ENCODE measurements at regions of chr22 and their contacts with region 1.

Region 1: GRCh38 chr22:20624161-20624616 is 116.8 kb downstream of the MED15 start:
- DNase-seq: no peak
- H3K4me3 Mint-ChIP-seq: no peak overlapping the region
- H3K27ac Mint-ChIP-seq: peak overlapping the region; percentile 52
- H3K4me1 Mint-ChIP-seq: peaks cover 20% of the 10 kb centered on the region
- H3K27me3 Mint-ChIP-seq: peaks cover 22% of the 10 kb centered on the region

Region 2: DNA sequence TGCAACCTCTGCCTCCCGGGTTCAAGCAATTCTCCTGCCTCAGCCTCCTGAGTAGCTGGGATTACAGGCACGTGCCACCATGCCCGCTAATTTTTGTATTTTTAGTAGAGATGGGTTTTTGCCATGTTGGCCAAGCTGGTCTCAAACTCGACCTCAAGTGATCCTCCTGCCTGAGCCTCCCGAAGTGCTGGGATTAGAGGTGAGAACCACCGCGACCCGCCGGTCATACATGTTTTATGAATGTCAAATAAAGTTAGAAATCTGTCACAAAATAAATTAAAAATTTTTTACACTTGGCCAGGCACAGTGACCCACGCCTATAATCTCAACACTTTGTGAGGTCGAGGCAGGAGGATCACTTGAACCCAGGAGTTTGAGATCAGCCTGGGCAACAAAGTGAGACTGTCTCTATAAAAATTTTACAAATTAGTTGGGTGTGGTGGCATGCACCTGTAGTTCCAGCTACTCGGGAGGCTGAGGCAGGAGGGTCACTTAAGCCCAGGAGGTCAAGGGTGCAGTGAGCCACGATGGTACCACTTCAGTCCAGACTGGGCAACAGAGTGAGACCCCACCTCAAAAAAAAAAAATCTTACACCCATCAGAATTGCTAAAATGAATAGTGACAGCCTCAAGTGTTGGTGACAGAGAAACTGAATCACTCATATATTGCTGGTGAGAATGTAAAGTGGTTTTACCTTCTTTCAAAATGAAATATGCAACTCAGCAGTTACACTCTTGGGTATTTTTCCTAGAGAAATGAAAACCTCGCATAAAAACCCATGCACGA is 61.5 kb before region 1 on chr22:
- intact Hi-C with region 1: loop called (anchors 2 kb)
- DNase-seq: no peak
- H3K4me3 Mint-ChIP-seq: no peak overlapping the region
- H3K27ac Mint-ChIP-seq: peak overlapping the region; percentile 44
- H3K4me1 Mint-ChIP-seq: peaks cover 53% of the 10 kb centered on the region
- H3K27me3 Mint-ChIP-seq: no peaks in the 10 kb centered on the region

Region 3: GRCh38 chr22:20606041-20606783 is 18.0 kb before region 1 on chr22:
- intact Hi-C with region 1: loop called (anchors 2 kb)
- DNase-seq: peak; percentile 51
- H3K4me3 Mint-ChIP-seq: no peak overlapping the region
- H3K27ac Mint-ChIP-seq: no peak overlapping the region
- H3K4me1 Mint-ChIP-seq: no peaks in the 10 kb centered on the region
- H3K27me3 Mint-ChIP-seq: no peaks in the 10 kb centered on the region

Region 4: DNA sequence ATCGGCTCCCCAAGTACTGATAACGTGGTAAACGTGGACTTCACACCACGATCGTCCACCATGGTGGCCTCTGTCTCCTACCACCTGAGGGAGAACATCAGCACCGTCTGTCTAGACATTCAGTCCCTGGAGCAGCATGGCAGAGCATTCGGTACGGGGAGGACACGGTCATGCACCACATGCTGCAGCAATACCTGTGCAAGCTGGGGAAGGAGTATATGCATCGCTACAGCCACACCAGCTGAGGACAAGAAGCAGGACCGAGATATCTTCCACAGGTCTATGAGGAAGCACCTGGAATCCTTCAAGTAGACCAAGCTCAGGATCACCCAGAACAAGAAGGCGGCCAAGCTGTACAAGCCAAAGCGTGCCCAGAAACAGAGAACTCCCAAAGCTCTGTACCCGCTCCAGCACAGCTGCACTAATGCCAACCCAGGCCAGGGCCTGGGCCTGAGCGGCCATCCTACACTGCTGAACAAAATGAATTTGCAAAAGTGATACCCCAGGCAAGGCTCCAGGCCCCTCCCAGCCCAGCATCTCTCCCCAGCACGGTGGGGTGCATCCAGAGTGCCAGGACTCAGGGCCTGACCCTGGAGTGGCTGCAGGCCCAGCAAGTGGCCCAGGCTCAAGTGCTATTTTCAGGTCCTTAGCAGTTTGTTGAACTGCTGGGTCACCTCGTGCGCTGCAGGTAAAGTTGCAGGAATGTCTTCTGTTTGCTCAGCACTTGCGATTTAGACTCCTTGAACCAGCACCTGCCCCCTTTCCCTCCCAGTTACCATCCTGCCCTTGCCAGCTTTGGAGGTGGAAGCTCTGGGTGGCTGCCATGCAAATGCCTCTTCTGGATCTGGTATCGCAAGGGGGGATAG is 30.4 kb after region 1 on chr22:
- intact Hi-C with region 1: no loop called
- DNase-seq: no peak
- H3K4me3 Mint-ChIP-seq: no peak overlapping the region
- H3K27ac Mint-ChIP-seq: no peak overlapping the region
- H3K4me1 Mint-ChIP-seq: no peaks in the 10 kb centered on the region
- H3K27me3 Mint-ChIP-seq: peaks cover 29% of the 10 kb centered on the region